Activated CD4-positive, alpha-beta T cell treated with anti-CD3 and anti-CD28 coated beads, Interleukin-2, amount 10 ng/mL, durations not matched to agents 7 days and 5 days (primary cell): ENCODE measurements at regions of chr13 and their contacts with region 1.

Region 1: GRCh38 chr13:97109841-97110492 is 112.2 kb upstream of the MBNL2 start:
- DNase-seq: peak; percentile 72
- H3K4me3 Mint-ChIP-seq: no peak overlapping the region
- H3K27ac Mint-ChIP-seq: no peak overlapping the region
- H3K4me1 Mint-ChIP-seq: peaks cover 7% of the 10 kb centered on the region
- H3K27me3 Mint-ChIP-seq: peaks cover 18% of the 10 kb centered on the region

Region 2: GRCh38 chr13:97148894-97149293 is 38.9 kb after region 1 on chr13:
- CTCF ChIA-PET with region 1: no interaction called
- POLR2A ChIA-PET with region 1: no interaction called
- DNase-seq: no peak
- H3K4me3 Mint-ChIP-seq: no peak overlapping the region
- H3K27ac Mint-ChIP-seq: no peak overlapping the region
- H3K4me1 Mint-ChIP-seq: no peaks in the 10 kb centered on the region
- H3K27me3 Mint-ChIP-seq: peaks cover 23% of the 10 kb centered on the region

Region 3: DNA sequence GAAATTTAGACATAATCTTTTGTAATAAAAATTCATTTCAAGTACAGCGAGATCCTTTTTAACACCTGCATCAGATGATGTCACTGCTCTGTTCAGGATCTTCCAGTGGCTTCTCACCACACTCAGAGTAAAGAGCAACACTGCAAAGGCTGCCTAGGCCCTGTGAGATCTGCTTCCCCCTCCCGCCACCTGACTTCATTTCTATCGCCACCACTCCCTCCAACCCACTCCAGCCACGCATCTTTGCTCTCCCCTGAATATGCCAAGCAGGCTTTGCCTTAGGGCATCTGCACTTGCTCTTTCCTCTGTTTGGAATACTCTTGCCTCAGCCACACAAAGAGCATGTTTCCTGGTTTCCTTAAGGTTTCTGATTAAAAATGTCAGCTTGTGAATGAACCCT is 170.5 kb after region 1 on chr13:
- CTCF ChIA-PET with region 1: no interaction called
- POLR2A ChIA-PET with region 1: no interaction called
- DNase-seq: no peak
- H3K4me3 Mint-ChIP-seq: no peak overlapping the region
- H3K27ac Mint-ChIP-seq: no peak overlapping the region
- H3K4me1 Mint-ChIP-seq: peaks cover 12% of the 10 kb centered on the region
- H3K27me3 Mint-ChIP-seq: no peaks in the 10 kb centered on the region

Region 4: GRCh38 chr13:97344265-97345175 is 234.6 kb after region 1 on chr13:
- CTCF ChIA-PET with region 1: interaction called, 13 read pairs
- POLR2A ChIA-PET with region 1: no interaction called
- DNase-seq: peak; percentile 62
- H3K4me3 Mint-ChIP-seq: no peak overlapping the region
- H3K27ac Mint-ChIP-seq: no peak overlapping the region
- H3K4me1 Mint-ChIP-seq: no peaks in the 10 kb centered on the region
- H3K27me3 Mint-ChIP-seq: no peaks in the 10 kb centered on the region

Region 5: DNA sequence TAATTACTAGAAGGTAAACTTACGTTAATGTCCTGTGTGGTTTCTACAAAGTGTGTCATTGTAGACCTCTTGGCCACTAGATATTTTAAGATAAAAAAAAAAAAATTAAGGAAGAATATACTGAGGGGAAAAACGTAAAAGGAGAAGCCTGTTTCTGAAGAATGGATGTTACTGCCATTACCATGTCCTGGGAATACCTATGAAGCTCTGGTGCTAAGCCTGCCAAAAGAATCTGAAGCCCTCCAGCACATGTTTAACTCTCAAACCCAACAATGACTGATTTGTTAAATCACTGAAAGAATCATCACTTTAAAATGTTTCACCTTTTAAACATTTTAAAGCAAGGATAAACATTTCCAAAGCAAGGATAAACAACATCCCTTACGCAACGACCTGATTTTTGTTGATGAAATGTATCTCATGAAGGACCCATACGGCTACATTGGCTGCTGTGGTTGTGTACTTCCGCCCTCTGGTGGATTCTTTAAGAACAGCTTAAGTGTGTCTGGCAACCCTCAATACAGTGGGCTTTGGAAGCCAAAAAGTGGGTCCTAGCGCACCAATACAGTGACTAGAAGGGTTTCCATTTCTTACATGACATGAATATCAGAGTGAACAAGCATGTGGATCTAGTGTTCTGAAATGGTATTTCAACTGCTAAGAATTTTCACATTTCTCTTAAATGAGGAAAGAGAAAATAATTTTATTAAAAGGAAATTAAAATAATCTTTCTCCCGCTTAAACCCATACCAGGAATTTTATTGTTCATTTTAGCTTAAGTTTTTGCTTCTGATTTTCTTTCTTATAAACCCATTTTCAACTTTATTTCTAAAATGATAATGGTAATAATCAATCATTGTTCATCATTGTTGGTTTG is 249.5 kb after region 1 on chr13:
- CTCF ChIA-PET with region 1: interaction called, 13 read pairs
- POLR2A ChIA-PET with region 1: no interaction called
- DNase-seq: peak; percentile 67
- H3K4me3 Mint-ChIP-seq: no peak overlapping the region
- H3K27ac Mint-ChIP-seq: no peak overlapping the region
- H3K4me1 Mint-ChIP-seq: no peaks in the 10 kb centered on the region
- H3K27me3 Mint-ChIP-seq: no peaks in the 10 kb centered on the region